MCF 10A (cell line): ENCODE measurements at regions of chr6 and their contacts with region 1.

Region 1: DNA sequence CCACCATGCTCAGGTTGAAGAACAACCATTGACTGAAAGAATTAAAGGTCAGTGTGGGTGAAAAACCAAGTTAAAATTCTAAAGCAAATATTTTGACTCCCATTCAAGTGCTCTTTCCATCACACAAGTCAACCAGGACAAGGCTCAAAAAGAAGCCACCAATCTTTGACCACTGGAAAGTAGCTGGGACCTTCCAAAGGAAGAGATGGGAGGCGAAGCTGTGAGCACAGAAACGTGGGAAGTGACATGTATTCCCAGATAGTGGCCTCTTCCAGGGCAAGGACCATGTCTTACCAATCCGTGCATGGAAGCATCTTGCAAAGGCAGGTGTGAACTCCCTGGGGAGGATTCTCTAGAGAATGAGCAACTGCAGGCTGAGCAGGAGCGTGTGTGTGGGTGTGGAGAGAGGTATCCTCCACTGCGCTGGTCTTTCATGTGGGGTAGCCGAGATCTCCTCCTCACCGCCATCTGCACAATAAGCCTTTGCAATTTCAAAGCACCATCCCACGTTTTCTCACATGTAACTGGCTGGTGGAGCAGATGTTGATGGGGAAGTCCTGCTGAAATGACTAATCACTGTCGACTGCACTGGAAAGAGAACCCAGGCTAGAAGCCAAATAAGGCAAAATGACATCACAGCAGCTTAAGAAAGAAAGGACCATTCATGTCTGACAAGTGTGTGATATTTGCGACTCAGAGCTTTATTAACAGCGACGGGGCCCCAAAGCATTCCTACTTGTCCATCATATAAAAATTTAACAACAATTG is 189.4 kb upstream of the RREB1 start:
- DNase-seq: peak; percentile 73
- H3K4me3 Mint-ChIP-seq: no peak overlapping the region
- H3K27ac Mint-ChIP-seq: no peak overlapping the region
- H3K4me1 Mint-ChIP-seq: peaks cover 27% of the 10 kb centered on the region
- H3K27me3 Mint-ChIP-seq: no peaks in the 10 kb centered on the region
- CTCF ChIP-seq: no peak

Region 2: DNA sequence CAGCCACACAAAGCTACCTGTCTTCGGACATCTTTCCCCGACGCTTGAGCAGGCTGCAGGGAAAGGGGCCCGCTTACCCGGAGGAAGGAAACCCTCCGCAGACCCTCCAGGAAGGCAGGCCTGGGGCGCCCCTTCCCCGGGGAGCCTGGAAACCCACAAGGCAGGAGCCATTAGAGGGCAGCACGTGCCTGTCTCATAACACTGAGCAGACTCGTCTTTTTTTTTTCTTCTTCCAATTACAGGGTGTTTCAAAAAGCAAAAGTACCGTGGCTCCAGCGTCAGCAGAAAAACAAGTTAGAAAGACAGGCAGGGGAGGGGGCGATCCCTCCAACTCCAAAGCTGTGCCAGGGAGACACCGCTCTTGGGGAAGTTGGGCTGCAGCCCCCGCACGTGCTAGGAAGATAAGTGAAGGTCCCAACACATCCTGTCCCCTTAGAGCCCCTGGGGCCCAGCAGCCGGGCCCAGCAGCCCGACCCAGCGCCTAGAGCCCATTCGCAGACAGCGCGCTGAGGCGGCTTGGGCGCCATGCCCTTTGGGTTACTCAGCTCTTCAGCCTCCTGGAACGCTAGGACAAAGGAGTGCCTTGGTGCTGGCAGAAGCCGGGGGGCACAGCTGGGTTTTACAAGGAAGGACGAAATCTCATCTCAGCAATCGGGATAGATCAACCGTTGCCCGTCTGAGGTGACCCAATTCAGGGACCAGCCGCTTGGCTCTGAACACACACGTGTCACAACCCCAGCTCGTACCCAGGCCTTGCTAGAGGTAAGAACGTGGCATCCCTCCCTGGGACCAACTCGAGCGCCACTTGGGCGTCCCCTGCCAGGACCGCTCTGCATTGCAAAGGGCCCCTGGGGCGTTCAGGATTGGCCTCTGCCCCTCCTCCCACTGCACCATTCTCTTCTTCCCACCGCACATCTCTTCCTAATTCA is 193.6 kb before region 1 on chr6:
- CTCF ChIA-PET with region 1: interaction called, 11 read pairs
- POLR2A ChIA-PET with region 1: no interaction called
- intact Hi-C with region 1: loop called (anchors 10 kb)
- DNase-seq: peak; percentile 77
- H3K4me3 Mint-ChIP-seq: peak overlapping the region; percentile 10
- H3K27ac Mint-ChIP-seq: peak overlapping the region; percentile 72
- H3K4me1 Mint-ChIP-seq: peaks cover 6% of the 10 kb centered on the region
- H3K27me3 Mint-ChIP-seq: no peaks in the 10 kb centered on the region
- CTCF ChIP-seq: peak; percentile 82

Region 3: DNA sequence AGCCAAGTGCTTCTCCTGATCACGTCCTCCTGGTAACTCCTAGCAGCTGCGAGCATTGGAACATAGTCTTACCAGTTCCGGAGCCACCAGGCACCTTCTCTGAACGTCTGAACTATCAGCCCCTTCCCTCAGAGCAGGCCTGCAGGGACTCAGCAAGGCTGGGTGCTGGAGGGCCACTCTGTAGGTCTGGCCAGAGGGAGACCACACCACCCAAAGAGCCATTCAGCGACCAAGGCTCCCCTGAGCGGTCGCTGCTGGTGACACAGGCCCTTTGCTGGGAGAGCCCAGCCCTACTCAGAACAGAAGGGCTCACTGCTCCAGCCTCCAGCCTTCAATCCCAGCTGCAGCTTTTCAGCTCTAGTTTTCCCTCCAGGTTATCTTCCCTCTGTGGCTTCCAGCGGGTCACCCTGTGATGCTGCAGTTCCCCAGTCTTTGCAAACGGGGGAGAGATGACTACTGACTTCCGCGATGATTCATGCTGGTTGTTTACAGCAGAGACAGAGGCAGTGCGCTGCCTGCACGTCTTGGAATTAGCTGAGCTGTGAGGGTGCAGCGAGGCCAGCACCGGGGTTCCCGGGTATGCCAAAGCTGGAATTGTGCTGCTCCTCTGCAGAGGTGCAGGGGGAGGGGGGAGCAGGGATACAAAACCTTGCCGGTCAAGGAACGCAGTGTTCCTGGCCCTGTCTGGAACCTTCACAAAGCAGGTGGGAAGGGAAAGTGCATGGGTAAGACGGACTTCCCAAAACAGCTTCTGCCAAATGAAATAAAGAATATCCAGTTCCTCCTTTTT is 168.5 kb before region 1 on chr6:
- CTCF ChIA-PET with region 1: no interaction called
- POLR2A ChIA-PET with region 1: interaction called, 10 read pairs
- intact Hi-C with region 1: no loop called
- DNase-seq: peak; percentile 92
- H3K4me3 Mint-ChIP-seq: peak overlapping the region; percentile 35
- H3K27ac Mint-ChIP-seq: peak overlapping the region; percentile 54
- H3K4me1 Mint-ChIP-seq: peaks cover 34% of the 10 kb centered on the region
- H3K27me3 Mint-ChIP-seq: no peaks in the 10 kb centered on the region
- CTCF ChIP-seq: no peak

Region 4: DNA sequence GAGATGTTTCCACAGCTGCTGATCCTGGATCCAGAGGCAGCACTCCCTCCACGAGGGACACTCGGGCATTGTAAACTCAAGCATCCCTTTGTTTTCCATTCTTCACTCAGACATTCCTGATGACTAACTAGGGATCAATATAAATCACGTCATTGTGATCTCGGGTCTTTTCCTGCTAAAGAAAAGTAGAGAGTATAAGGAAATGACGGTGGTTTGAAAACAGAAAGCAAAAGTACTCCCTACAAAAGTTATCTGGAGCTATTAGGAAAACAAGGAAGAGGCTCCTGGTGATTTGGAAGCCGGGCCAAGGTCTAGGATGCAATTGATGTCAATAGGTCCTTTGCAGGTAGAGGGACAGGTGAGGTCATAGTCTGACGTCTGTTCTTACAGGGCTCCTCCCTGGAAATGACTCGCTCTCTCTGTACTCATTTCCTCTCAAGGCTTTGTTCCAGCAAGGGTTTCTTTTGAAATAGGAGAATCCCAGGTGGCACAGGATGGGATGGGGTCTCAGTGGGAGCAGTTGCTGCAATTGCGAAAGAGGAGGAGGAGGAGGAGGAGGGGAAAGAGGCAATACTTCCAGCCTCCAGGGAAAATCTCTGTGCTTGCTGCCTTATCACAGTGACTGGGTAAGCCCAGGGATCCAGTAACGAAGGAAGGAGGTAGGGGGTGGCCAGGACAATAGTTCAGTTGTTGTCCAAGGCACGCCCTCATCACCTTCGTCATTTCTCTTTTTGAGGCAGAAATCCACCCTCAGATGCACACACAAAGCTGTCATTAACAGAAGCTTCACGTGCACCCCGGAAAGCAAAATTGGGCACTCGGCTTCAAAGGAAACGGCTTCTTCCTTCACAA is 107.0 kb before region 1 on chr6:
- CTCF ChIA-PET with region 1: no interaction called
- POLR2A ChIA-PET with region 1: interaction called, 12 read pairs
- intact Hi-C with region 1: no loop called
- DNase-seq: peak; percentile 98
- H3K4me3 Mint-ChIP-seq: peak overlapping the region; percentile 48
- H3K27ac Mint-ChIP-seq: peak overlapping the region; percentile 80
- H3K4me1 Mint-ChIP-seq: peaks cover 28% of the 10 kb centered on the region
- H3K27me3 Mint-ChIP-seq: no peaks in the 10 kb centered on the region
- CTCF ChIP-seq: no peak

Region 5: DNA sequence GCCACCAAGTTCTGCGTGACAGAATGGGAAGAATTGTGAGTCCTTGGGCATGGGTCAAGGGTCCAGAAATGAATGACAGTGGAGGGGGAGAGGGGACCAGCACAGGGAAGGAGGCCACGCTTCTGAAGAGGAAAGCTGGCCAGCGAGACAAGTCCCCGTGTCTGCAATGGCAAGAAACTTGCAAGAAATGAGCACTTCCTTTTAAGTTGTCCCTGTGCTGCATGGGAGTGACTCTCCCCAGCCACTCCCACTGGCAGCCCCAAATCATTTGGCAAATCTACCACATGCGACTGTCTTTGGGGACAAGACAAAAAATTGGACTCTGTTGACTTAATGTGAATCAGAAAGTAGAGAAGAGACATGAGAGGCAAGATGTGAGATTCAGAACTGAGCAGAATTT is 52.8 kb before region 1 on chr6:
- CTCF ChIA-PET with region 1: no interaction called
- POLR2A ChIA-PET with region 1: no interaction called
- intact Hi-C with region 1: no loop called
- DNase-seq: no peak
- H3K4me3 Mint-ChIP-seq: no peak overlapping the region
- H3K27ac Mint-ChIP-seq: no peak overlapping the region
- H3K4me1 Mint-ChIP-seq: no peaks in the 10 kb centered on the region
- H3K27me3 Mint-ChIP-seq: no peaks in the 10 kb centered on the region
- CTCF ChIP-seq: no peak

Region 6: GRCh38 chr6:6905961-6906518 is 12.4 kb before region 1 on chr6:
- CTCF ChIA-PET with region 1: interaction called, 3 read pairs
- POLR2A ChIA-PET with region 1: interaction called, 22 read pairs
- intact Hi-C with region 1: no loop called
- DNase-seq: no peak
- H3K4me3 Mint-ChIP-seq: no peak overlapping the region
- H3K27ac Mint-ChIP-seq: no peak overlapping the region
- H3K4me1 Mint-ChIP-seq: peaks cover 15% of the 10 kb centered on the region
- H3K27me3 Mint-ChIP-seq: no peaks in the 10 kb centered on the region
- CTCF ChIP-seq: no peak

Region 7: GRCh38 chr6:7058250-7058923 is 140.0 kb after region 1 on chr6:
- CTCF ChIA-PET with region 1: interaction called, 4 read pairs
- POLR2A ChIA-PET with region 1: interaction called, 21 read pairs
- intact Hi-C with region 1: no loop called
- DNase-seq: peak; percentile 99
- H3K4me3 Mint-ChIP-seq: peak overlapping the region; percentile 44
- H3K27ac Mint-ChIP-seq: peak overlapping the region; percentile 91
- H3K4me1 Mint-ChIP-seq: peaks cover 30% of the 10 kb centered on the region
- H3K27me3 Mint-ChIP-seq: no peaks in the 10 kb centered on the region
- CTCF ChIP-seq: no peak

Region 8: DNA sequence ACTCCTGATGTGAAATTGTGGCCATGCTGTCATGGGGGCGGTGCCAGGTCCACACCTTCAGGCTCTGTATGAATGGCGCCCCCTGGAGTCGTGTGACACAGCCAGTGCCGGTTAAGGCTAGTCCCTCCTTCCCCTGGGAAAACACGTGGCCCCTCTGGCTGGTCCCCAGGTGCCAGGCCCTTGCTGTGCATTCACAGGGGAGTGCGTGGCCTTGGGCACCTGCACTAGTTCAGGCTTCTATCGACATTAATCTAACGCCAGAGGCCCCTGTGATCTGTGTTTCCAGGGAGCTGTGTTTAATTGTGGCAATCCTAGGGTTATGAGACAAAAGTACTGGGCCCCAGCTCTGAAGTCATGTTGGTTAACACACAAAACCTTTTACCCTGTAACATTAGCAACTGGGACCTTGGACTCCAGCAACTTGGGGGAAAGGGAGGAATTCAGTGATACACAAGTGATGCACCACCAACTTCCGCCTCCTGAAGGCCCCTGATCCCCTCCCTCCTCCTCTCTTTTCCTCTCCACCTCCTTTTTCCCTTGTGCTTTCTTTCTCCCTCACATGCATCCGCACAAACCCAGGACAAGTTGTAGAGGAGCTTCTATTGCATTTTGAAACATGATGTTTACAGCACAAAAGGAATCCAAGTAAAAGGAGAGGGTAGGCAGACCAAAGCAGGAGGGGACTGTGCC is 320.6 kb after region 1 on chr6:
- CTCF ChIA-PET with region 1: interaction called, 5 read pairs
- POLR2A ChIA-PET with region 1: interaction called, 4 read pairs
- intact Hi-C with region 1: loop called (anchors 5 kb)
- DNase-seq: peak; percentile 85
- H3K4me3 Mint-ChIP-seq: no peak overlapping the region
- H3K27ac Mint-ChIP-seq: peak overlapping the region; percentile 41
- H3K4me1 Mint-ChIP-seq: peaks cover 30% of the 10 kb centered on the region
- H3K27me3 Mint-ChIP-seq: no peaks in the 10 kb centered on the region
- CTCF ChIP-seq: peak; percentile 45